Right cardiac atrium (tissue), 5 donors: ENCODE measurements at regions of chr11 and their contacts with region 1.

Region 1: DNA sequence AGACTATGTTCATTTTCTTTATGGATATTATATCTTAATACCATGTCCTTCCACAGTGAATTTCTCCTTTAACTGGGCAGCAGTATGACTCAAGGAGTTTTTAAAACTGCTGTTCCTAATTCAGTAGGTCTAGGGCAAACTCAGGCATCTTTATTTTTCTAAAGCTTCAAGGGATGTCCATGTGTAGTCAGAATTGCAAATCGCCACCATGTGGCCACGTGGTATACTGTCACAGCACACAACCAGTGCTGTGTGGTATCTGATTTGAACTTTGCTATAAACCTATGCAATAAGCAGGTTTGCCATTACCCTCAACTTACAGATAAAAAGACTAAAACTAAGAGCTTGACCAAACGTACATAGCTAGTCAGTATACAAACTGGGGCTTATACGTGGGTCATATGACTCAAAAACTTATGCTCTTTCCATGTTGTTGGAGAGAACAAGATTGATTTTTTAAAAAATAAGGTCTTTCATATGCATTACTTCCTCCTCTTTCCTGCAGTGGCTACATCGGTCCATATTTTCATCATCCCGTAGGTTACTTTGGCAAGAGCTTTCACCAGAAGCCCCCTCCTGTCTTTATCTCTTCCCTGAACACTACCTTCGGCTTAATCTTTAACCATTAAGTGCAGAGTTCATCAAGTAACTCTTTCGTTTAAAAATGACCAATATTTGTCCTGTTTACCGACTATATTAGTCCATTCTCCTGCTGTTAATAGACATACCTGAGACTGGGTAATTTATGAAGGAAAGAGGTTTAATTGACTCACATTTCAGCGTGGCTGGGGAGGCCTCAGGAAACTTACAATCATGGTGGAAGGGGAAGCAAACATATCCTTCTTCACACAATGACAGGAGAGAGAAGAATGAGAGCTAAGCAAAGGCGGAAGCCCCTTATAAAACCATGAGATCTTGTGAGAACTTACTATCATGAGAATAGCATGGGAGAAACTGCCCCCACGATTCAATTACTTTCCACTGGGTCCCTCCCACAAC is 8.0 kb upstream of the HTATIP2 start:
- DNase-seq: no peak
- ATAC-seq: peak in 1 of 2 donors; percentile 66
- H3K4me3 ChIP-seq: no peak overlapping the region
- H3K27ac ChIP-seq: no peak overlapping the region
- H3K4me1 ChIP-seq: no peaks in the 10 kb centered on the region
- H3K27me3 ChIP-seq: no peaks in the 10 kb centered on the region

Region 2: GRCh38 chr11:20127671-20128527 is 227.6 kb before region 1 on chr11:
- intact Hi-C with region 1: loop called (anchors 5 to 10 kb)
- DNase-seq: peak; percentile 71 to 86 (median 86)
- ATAC-seq: peak; percentile 77 to 83
- H3K4me3 ChIP-seq: no peak overlapping the region
- H3K27ac ChIP-seq: no peak overlapping the region
- H3K4me1 ChIP-seq: no peaks in the 10 kb centered on the region
- H3K27me3 ChIP-seq: no peaks in the 10 kb centered on the region

Region 3: GRCh38 chr11:20489948-20490347 is 134.4 kb after region 1 on chr11:
- intact Hi-C with region 1: no loop called
- DNase-seq: no peak
- ATAC-seq: no peak
- H3K4me3 ChIP-seq: no peak overlapping the region
- H3K27ac ChIP-seq: no peak overlapping the region
- H3K4me1 ChIP-seq: no peaks in the 10 kb centered on the region
- H3K27me3 ChIP-seq: no peaks in the 10 kb centered on the region